ENCODE measurements at regions of chr6 and their contacts with region 1.

Region 1: GRCh38 chr6:142952614-142953013 is 7.6 kb upstream of the HIVEP2 start:
- DNase-seq: no peak
- H3K4me3 ChIP-seq: no peak overlapping the region
- H3K27ac ChIP-seq: no peak overlapping the region
- H3K4me1 ChIP-seq: no peaks in the 10 kb centered on the region
- H3K27me3 ChIP-seq: no peaks in the 10 kb centered on the region
- CTCF ChIP-seq: no peak

Region 2: GRCh38 chr6:142902636-142903053 is 50.0 kb before region 1 on chr6:
- intact Hi-C with region 1: no loop called
- DNase-seq: peak; percentile 48
- H3K4me3 ChIP-seq: no peak overlapping the region
- H3K27ac ChIP-seq: no peak overlapping the region
- H3K4me1 ChIP-seq: no peaks in the 10 kb centered on the region
- H3K27me3 ChIP-seq: no peaks in the 10 kb centered on the region
- CTCF ChIP-seq: no peak

Region 3: DNA sequence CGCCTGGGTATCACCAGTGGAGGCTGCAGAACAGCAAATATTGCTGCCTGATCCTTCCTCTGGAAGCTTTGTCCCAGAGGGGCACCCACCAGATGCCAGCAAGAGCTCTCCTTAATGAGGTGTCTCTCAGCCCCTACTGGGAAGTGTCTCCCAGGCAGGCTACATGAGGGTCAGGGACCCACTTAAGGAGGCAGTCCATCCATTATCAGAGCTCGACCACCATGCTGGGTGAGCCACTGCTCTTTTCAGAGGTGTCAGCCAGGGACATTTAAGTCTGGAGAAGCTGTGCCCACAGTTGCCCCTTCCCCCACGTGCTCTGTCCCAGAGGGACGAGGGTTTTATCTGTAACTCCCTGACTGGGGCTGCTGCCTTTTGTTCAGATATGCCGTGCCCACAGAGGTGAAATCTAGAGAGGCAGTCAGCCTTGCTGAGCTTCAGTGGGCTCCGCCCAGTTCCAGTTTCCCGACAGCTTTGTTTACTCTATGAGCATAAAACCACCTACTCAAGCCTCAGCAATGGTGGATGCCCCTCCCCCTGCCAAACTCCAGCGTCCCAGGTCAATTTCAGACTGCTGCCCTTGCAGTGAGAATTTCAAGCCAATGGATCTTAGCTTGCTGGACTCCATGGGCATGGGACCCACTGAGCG is 82.2 kb after region 1 on chr6:
- intact Hi-C with region 1: loop called (anchors 10 kb)
- DNase-seq: peak; percentile 68
- H3K4me3 ChIP-seq: no peak overlapping the region
- H3K27ac ChIP-seq: no peak overlapping the region
- H3K4me1 ChIP-seq: no peaks in the 10 kb centered on the region
- H3K27me3 ChIP-seq: no peaks in the 10 kb centered on the region
- CTCF ChIP-seq: no peak

Measured in colonic mucosa (tissue), 4 donors.